Natural killer cell (primary cell): ENCODE measurements at regions of chrX and their contacts with region 1.

Region 1: DNA sequence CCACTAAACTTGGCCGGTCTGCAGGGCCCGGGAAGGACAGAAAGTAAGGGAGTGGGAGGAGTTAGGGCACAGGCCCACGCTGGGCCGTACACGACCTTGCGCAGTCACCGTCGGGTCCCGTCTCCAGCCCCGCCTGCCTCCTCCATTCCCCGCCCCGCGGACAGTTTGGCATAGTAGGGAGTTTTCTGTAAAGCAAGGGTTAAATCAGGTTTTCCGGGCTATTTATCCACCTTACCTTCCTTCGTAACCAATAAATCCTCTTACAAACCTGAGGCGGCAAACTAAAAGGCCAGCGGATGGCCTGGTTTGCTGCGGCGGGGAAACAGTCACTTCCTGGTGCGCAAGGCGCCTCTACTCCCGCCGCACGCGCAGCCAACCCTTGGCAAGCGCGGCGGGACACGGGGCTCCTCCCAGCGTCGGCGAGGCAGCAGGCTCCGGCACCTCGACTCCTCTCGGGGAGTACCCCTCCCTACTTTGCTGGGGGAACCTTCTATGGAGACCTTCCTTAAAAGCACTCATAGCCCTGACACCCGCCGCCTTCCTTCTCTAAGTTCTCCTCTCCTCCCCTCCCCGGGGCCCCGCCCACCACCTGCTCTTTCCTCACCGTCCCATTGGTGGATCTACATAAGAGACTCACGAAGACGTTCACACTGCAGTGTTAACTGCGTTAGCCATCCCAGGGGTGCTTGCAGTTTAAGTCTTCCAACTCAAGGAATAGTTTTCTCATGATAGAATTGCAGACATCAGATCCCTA is at the start of gene TRMT2B:
- DNase-seq: peak; percentile 54 to 85
- ATAC-seq: peak; percentile 85 to 95 (median 87)
- H3K4me3 ChIP-seq: peak within 1 kb of the TSS; percentile 87
- H3K4me3 Mint-ChIP-seq: peak within 1 kb of the TSS; percentile 90
- H3K27ac ChIP-seq: peak within 1 kb of the TSS; percentile 97
- H3K27ac Mint-ChIP-seq: peak within 1 kb of the TSS; percentile 92 to 98
- H3K4me1 ChIP-seq: peaks cover 11% of the 10 kb centered on the region
- H3K4me1 Mint-ChIP-seq: peaks cover 5 to 21% of the 10 kb centered on the region in 2 donors
- H3K27me3 ChIP-seq: no peaks in the 10 kb centered on the region
- H3K27me3 Mint-ChIP-seq: no peaks in the 10 kb centered on the region
- CTCF ChIP-seq: no peak
- total RNA-seq, gene TRMT2B: 31.2 to 37.1 (median 36.7) TPM

Region 2: DNA sequence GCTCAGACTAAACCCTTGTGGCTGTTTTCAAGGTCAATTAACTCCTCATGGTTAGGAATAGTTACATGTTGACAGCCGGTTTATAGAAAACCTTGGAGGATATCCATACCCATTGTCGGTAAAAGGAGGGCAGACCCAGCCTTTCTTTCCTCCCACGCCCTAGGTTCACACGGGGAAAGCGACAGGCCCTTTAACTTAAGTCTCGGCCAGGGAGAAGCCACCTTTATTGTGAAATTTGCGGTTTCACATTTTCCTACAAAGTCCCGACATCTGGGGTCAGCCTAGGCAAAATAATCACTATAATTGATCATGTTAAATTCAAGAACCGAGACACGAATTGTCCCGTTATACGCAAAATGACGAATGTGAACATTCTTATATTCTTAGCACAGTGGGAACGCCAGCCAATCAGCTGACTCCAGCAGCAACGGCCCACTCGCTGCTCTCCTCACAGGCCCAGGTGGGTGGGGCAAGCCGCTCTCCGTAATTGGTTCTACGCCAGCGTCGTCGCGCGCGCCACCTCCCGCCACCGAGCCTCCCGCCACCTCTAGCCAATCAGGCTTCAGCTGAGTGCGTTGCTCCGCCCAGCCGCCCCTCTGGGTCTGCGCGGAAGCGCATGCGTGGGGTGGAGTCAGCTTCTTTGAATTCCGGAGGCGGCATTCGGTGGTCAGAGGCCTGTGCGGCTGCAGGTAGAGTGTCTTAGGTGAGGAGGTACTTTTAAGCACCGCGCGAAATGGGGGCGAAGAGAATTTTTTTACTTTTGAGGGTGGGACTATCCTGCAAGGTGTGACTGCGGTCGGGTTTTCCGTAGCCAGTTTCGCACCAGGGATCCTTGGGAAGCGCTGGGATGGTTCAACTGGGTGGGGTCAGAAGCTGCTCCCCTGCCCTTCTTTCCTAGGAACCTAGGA is 46.1 kb after region 1 on chrX and contains the start of gene CENPI:
- intact Hi-C with region 1: loop called (anchors 2 kb)
- DNase-seq: peak; percentile 86 to 95
- ATAC-seq: peak; percentile 99 to 100 (median 99)
- H3K4me3 ChIP-seq: peak within 1 kb of the TSS; percentile 63
- H3K4me3 Mint-ChIP-seq: peak within 1 kb of the TSS; percentile 90
- H3K27ac ChIP-seq: peak within 1 kb of the TSS; percentile 84
- H3K27ac Mint-ChIP-seq: peak within 1 kb of the TSS; percentile 87 to 89
- H3K4me1 ChIP-seq: peaks cover 6% of the 10 kb centered on the region
- H3K4me1 Mint-ChIP-seq: peaks cover 7 to 15% of the 10 kb centered on the region in 2 donors
- H3K27me3 ChIP-seq: no peaks in the 10 kb centered on the region
- H3K27me3 Mint-ChIP-seq: no peaks in the 10 kb centered on the region
- CTCF ChIP-seq: no peak
- total RNA-seq, gene CENPI: 1.0 to 1.6 (median 1.2) TPM